Activated naive CD4-positive, alpha-beta T cell treated with anti-CD3 and anti-CD28 coated beads for 36 hours (primary cell): ENCODE measurements at regions of chr6 and their contacts with region 1.

Region 1: GRCh38 chr6:35669451-35670045 is 19.2 kb downstream of the FKBP5 start:
- DNase-seq: no peak
- H3K4me3 Mint-ChIP-seq: peak overlapping the region; percentile 56
- H3K27ac Mint-ChIP-seq: peak overlapping the region; percentile 96
- H3K4me1 Mint-ChIP-seq: peaks cover 59% of the 10 kb centered on the region
- H3K27me3 Mint-ChIP-seq: no peaks in the 10 kb centered on the region

Region 2: GRCh38 chr6:35601331-35602132 is 68.0 kb before region 1 on chr6:
- CTCF ChIA-PET with region 1: interaction called, 5 read pairs
- intact Hi-C with region 1: loop called (anchors 5 kb)
- DNase-seq: peak; percentile 78
- H3K4me3 Mint-ChIP-seq: peak overlapping the region; percentile 58
- H3K27ac Mint-ChIP-seq: peak overlapping the region; percentile 80
- H3K4me1 Mint-ChIP-seq: peaks cover 79% of the 10 kb centered on the region
- H3K27me3 Mint-ChIP-seq: no peaks in the 10 kb centered on the region

Region 3: DNA sequence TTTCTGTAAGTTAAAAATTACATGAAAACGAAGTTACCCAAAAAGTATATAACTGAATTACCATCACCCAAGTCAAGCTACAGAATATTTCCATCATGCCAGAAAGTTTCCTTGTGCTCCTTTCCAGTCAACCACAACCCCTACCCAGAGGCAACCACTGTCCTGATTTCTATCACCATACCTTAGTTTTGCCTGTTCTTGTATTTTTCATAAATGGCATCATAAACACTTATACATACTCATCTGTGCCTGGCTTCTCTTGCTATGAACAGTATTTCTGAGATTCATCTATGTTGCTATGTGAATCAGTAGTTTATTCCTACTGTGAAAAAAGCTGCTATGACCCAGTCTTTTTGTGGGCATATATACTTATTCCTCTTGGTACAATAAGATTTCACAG is 11.8 kb after region 1 on chr6:
- CTCF ChIA-PET with region 1: interaction called, 7 read pairs
- intact Hi-C with region 1: loop called (anchors 1 kb)
- DNase-seq: peak; percentile 64
- H3K4me3 Mint-ChIP-seq: peak overlapping the region; percentile 43
- H3K27ac Mint-ChIP-seq: peak overlapping the region; percentile 74
- H3K4me1 Mint-ChIP-seq: peaks cover 68% of the 10 kb centered on the region
- H3K27me3 Mint-ChIP-seq: no peaks in the 10 kb centered on the region

Region 4: DNA sequence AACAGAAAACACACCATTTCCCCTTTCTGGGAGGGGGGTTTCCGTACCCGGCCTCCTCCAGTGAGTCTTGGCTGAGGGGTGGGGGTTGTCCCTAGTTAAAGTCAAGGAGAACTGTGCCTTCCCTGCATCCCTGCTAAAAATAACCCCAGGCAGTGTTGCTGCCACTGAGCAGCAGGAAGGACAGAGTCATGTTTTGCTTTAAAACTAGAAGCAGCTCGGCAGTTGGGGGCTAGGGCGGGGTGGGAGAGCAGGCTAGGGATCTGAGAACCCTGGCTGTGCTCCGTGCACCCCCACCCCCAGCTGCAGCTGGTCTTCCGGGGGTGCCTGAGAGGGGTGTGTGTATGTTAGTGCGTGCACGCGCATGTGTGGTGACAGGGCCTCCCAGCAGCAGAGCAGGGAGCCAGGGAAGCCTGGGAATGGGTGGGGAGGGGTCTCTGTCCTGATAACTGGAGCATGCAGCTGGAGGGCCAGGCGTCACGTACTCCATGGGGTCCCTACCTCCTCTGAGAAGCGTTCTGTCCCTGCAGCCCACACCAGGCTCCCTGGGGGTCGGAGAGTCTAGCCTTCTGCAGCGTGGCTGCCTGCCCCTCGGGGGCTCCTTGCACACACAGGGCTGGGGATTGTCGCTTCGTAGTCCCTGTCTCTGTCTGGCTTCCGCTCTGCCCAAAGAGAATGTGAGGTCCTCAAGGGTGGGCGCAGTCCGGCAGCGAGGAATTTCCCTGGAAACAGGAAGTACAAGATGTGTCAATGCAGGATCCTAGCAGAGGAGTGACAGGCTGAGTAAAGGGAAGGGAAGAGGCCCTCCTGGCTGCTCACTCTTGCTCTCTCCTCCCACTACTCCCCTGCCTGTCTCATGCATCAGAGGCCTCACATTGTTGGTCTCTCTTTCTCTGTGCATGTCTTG is 50.5 kb after region 1 on chr6:
- CTCF ChIA-PET with region 1: interaction called, 4 read pairs
- intact Hi-C with region 1: loop called (anchors 1 kb)
- DNase-seq: peak; percentile 84
- H3K4me3 Mint-ChIP-seq: peak overlapping the region; percentile 80
- H3K27ac Mint-ChIP-seq: peak overlapping the region; percentile 91
- H3K4me1 Mint-ChIP-seq: peaks cover 74% of the 10 kb centered on the region
- H3K27me3 Mint-ChIP-seq: no peaks in the 10 kb centered on the region

Region 5: GRCh38 chr6:35920793-35921732 is 251.5 kb after region 1 on chr6 and contains the start of gene SRPK1:
- CTCF ChIA-PET with region 1: no interaction called
- intact Hi-C with region 1: loop called (anchors 5 kb)
- DNase-seq: peak; percentile 92
- H3K4me3 Mint-ChIP-seq: peak within 1 kb of the TSS; percentile 99
- H3K27ac Mint-ChIP-seq: peak within 1 kb of the TSS; percentile 98
- H3K4me1 Mint-ChIP-seq: peaks cover 46% of the 10 kb centered on the region
- H3K27me3 Mint-ChIP-seq: no peaks in the 10 kb centered on the region
- total RNA-seq, gene SRPK1: 126 to 127 TPM

Region 6: DNA sequence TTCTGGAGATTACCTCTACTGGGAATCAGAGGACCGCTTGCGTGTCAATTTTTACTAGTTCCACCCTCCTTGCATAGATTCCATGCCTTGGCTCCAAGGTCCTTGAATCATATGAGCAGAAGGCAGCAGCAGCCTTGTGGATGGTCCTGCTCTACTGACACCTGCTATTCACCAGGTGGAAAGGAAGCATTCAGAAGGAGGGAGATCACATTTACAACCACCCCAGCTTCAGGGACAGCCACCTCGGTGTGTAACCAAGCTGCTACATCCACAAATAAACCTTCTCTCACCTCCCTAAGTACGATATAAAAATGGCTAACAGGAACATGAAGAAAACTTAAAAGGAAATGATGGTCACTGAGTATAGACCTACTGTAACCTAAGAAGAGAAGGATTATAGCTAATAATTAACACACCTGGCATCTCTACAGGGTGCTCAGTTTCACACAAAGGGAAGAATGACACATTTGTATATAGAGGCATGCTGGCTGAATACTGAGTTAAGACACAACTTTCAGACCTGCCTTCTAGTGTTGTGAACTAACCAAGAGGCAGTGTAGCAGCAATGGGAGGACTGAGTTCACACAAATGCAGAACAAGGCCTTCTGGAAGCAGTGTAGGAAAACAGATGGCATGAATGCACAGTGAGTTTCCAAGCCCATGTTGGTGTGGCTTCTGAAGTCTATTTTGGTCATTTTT is 297.7 kb after region 1 on chr6:
- CTCF ChIA-PET with region 1: no interaction called
- intact Hi-C with region 1: no loop called
- DNase-seq: no peak
- H3K4me3 Mint-ChIP-seq: no peak overlapping the region
- H3K27ac Mint-ChIP-seq: no peak overlapping the region
- H3K4me1 Mint-ChIP-seq: no peaks in the 10 kb centered on the region
- H3K27me3 Mint-ChIP-seq: peaks cover 3% of the 10 kb centered on the region

Region 7: DNA sequence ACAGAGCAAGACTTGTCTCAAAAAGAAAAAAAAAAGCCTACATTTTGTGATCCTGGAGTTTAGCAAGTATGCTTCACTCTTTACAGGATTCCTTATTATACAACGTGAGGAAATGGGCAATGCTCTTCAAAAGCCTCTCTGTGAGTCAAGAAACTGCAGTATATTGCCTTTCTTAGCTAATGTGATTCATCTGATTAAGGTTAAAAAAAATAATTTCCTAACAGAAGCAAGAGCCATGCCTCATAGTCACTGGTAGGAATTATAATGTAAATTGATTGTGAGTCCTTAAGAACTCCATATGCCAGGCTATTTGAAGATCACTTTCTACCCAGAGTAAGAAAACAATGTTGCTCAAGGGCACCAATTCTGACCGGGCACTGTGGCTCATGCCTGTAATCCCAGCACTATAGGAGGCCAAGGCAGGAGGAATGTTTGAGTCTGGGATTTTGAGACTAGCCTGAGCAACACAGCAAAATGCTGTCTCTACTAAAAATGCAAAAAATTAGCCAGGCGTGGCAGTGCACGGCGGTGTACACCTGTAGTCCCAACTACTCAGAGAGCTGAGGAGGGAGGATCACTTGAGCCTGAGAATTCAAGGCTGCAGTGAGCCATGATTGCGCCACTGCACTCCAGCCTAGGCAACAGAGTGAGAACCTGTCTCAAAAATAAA is 311.6 kb after region 1 on chr6:
- CTCF ChIA-PET with region 1: no interaction called
- intact Hi-C with region 1: no loop called
- DNase-seq: no peak
- H3K4me3 Mint-ChIP-seq: no peak overlapping the region
- H3K27ac Mint-ChIP-seq: no peak overlapping the region
- H3K4me1 Mint-ChIP-seq: no peaks in the 10 kb centered on the region
- H3K27me3 Mint-ChIP-seq: no peaks in the 10 kb centered on the region

Region 8: GRCh38 chr6:36526066-36526465 is 856.5 kb after region 1 on chr6:
- CTCF ChIA-PET with region 1: no interaction called
- intact Hi-C with region 1: no loop called
- DNase-seq: no peak
- H3K4me3 Mint-ChIP-seq: no peak overlapping the region
- H3K27ac Mint-ChIP-seq: peak overlapping the region; percentile 8
- H3K4me1 Mint-ChIP-seq: peaks cover 35% of the 10 kb centered on the region
- H3K27me3 Mint-ChIP-seq: no peaks in the 10 kb centered on the region

Region 9: GRCh38 chr6:37259191-37259590 is 1589.6 kb after region 1 on chr6:
- CTCF ChIA-PET with region 1: no interaction called
- intact Hi-C with region 1: no loop called
- DNase-seq: no peak
- H3K4me3 Mint-ChIP-seq: peak overlapping the region; percentile 80
- H3K27ac Mint-ChIP-seq: peak overlapping the region; percentile 87
- H3K4me1 Mint-ChIP-seq: peaks cover 55% of the 10 kb centered on the region
- H3K27me3 Mint-ChIP-seq: no peaks in the 10 kb centered on the region